ENCODE measurements at regions of chr20 and their contacts with region 1.

Region 1: DNA sequence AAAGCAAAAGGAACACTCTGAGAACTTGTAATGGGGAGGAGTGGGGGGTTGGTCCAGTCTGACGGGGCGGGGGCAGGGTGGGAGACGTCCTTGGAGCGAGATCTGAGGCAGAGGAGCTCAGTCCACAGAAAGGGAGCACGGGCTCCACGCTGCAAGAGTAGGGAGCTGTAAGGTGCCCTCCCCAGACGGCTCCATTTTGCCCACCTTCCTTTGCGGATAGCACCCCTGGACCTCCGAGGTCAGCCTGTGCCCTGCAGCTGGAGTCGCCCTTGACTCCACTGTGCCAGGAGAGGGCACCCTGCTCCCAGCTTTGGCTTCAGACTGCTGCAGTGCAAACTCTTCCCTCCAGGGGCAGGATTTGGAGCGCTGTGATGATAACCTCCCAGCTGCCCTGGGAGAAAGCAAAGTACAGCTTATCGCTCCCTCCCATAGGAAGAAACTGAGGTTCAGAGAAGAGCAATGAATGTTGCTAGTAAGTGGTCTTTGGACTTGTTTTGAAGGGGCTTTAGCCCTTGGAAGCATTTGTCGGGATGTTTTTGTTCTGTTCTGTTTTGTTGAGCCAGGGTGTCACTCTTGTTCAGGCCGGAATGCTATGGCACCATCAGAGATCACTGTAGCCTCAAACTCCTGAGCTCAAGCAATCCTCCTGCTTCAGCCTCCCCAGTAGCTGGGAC is 9.5 kb upstream of the AHCY start:
- DNase-seq: peak; percentile 93
- H3K4me3 ChIP-seq: no peak overlapping the region
- H3K27ac ChIP-seq: no peak overlapping the region
- H3K4me1 ChIP-seq: no peaks in the 10 kb centered on the region
- CTCF ChIP-seq: peak; percentile 100

Region 2: GRCh38 chr20:33897313-33897912 is 415.3 kb before region 1 on chr20:
- CTCF ChIA-PET with region 1: no interaction called
- POLR2A ChIA-PET with region 1: no interaction called
- intact Hi-C with region 1: no loop called
- DNase-seq: no peak
- H3K4me3 ChIP-seq: no peak overlapping the region
- H3K27ac ChIP-seq: no peak overlapping the region
- H3K4me1 ChIP-seq: peaks cover 52% of the 10 kb centered on the region
- CTCF ChIP-seq: peak; percentile 85

Region 3: DNA sequence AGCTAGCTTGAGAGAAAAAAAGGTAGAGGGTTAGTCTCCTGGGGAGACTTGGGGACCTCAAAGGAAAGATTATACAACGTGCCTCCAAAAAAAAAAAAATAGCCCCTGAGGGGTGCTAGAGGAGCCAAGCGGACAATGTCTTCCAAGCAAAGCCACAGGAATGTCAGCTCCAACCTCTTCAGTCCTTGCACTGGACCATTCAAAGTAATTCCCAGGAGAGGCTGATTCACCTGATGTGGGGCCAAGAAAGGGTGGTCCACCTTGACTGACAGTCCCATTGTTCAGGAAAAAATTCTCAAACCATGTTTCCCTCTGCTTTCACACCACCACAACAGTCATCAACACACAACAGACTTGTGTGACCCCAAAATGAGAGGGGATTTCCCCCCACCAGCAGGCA is 40.7 kb before region 1 on chr20:
- CTCF ChIA-PET with region 1: no interaction called
- POLR2A ChIA-PET with region 1: no interaction called
- intact Hi-C with region 1: no loop called
- DNase-seq: no peak
- H3K4me3 ChIP-seq: no peak overlapping the region
- H3K27ac ChIP-seq: no peak overlapping the region
- H3K4me1 ChIP-seq: no peaks in the 10 kb centered on the region
- CTCF ChIP-seq: no peak

Region 4: GRCh38 chr20:34407962-34408474 is 95.3 kb after region 1 on chr20:
- CTCF ChIA-PET with region 1: no interaction called
- POLR2A ChIA-PET with region 1: no interaction called
- intact Hi-C with region 1: loop called (anchors 5 kb)
- DNase-seq: no peak
- H3K4me3 ChIP-seq: no peak overlapping the region
- H3K27ac ChIP-seq: no peak overlapping the region
- H3K4me1 ChIP-seq: peaks cover 33% of the 10 kb centered on the region
- CTCF ChIP-seq: no peak

Region 5: DNA sequence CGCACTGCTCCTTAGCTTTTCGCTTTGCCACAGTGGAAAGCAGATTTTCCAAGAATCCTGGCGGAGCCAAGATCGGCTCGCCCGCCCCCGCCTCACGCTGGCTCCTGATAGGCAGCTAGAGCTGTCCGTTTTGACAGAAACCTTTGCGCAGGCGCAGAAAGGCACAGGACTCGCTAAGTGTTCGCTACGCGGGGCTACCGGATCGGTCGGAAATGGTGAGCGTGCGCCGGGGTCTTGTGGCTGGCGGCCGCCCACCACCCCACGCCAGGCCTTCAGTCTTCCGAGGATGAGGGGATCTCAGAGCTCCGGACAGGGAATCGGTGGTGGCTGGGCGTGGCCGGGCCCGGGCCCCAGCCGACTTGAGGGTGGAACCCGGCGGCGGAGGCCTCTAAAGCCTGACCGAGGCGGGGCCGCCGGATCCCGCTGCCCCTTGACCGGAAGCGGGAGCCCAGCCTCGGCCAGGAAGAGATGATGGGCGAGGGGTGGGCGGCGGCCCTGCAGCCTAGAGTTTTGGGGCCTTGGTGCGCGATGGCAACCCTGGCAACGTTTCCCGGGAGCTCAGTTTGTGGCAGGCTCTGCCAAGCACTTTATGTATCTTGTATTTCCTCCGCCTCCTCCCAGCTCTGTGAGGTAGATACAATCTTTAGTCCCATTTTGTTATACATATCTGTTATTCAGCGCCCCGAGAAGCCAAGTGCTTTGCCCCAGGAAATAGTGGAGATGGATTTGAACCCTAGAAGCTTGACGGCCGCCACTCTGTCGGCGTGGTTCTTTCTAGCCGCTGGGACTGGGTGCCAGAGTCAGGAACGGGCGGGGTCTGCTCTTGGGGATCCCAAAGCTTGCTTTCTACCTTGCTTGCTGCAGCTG is 203.8 kb after region 1 on chr20 and contains the start of gene DYNLRB1:
- CTCF ChIA-PET with region 1: interaction called, 16 read pairs
- POLR2A ChIA-PET with region 1: interaction called, 6 read pairs
- intact Hi-C with region 1: no loop called
- DNase-seq: peak; percentile 99
- H3K4me3 ChIP-seq: peak within 1 kb of the TSS; percentile 99
- H3K27ac ChIP-seq: peak within 1 kb of the TSS; percentile 29
- H3K4me1 ChIP-seq: peaks cover 19% of the 10 kb centered on the region
- CTCF ChIP-seq: no peak
- total RNA-seq, gene DYNLRB1: 128 and 155 TPM in 2 replicates

Region 6: GRCh38 chr20:34704177-34705007 is 391.7 kb after region 1 on chr20 and contains the start of gene TP53INP2:
- CTCF ChIA-PET with region 1: no interaction called
- POLR2A ChIA-PET with region 1: no interaction called
- intact Hi-C with region 1: loop called (anchors 2 kb)
- DNase-seq: peak; percentile 88
- H3K4me3 ChIP-seq: peak within 1 kb of the TSS; percentile 93
- H3K27ac ChIP-seq: peak within 1 kb of the TSS; percentile 54
- H3K4me1 ChIP-seq: peaks cover 19% of the 10 kb centered on the region
- CTCF ChIP-seq: no peak
- total RNA-seq, gene TP53INP2: 0.73 and 0.82 TPM in 2 replicates